Activated CD4-positive, alpha-beta T cell treated with anti-CD3 and anti-CD28 coated beads, Interleukin-2, amount 10 ng/mL, durations not matched to agents 24 days and 14 days (primary cell): ENCODE measurements at regions of chr1 and their contacts with region 1.

Region 1: GRCh38 chr1:209723756-209724693 is 19.4 kb downstream of the HSD11B1 start:
- DNase-seq: peak; percentile 83
- H3K4me3 Mint-ChIP-seq: peak overlapping the region; percentile 47
- H3K27ac Mint-ChIP-seq: peak overlapping the region; percentile 100
- H3K4me1 Mint-ChIP-seq: peaks cover 55% of the 10 kb centered on the region
- H3K27me3 Mint-ChIP-seq: no peaks in the 10 kb centered on the region

Region 2: GRCh38 chr1:209688746-209689234 is 35.2 kb before region 1 on chr1:
- intact Hi-C with region 1: no loop called
- DNase-seq: no peak
- H3K4me3 Mint-ChIP-seq: no peak overlapping the region
- H3K27ac Mint-ChIP-seq: no peak overlapping the region
- H3K4me1 Mint-ChIP-seq: peaks cover 59% of the 10 kb centered on the region
- H3K27me3 Mint-ChIP-seq: no peaks in the 10 kb centered on the region

Region 3: DNA sequence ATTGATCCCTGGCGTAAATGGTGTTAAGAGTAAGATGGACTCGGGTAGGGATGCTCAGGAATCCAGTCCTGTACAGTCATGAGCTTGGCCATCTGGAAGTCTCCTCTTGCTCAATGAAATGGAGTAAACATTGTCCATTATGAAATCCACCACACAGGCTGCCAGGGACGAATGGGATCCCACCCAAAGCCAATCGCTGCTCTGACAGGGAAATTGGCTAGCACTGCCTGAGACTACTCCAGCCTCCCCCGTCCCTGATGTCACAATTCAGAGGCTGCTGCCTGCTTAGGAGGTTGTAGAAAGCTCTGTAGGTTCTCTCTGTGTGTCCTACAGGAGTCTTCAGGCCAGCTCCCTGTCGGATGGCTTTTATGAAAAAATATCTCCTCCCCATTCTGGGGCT is 19.4 kb before region 1 on chr1 and contains the start of gene HSD11B1:
- intact Hi-C with region 1: loop called (anchors 1 kb)
- DNase-seq: no peak
- H3K4me3 Mint-ChIP-seq: peak within 1 kb of the TSS; percentile 54
- H3K27ac Mint-ChIP-seq: peak within 1 kb of the TSS; percentile 91
- H3K4me1 Mint-ChIP-seq: peaks cover 71% of the 10 kb centered on the region
- H3K27me3 Mint-ChIP-seq: no peaks in the 10 kb centered on the region
- total RNA-seq, gene HSD11B1: 15.1 TPM in 2 replicates

Region 4: DNA sequence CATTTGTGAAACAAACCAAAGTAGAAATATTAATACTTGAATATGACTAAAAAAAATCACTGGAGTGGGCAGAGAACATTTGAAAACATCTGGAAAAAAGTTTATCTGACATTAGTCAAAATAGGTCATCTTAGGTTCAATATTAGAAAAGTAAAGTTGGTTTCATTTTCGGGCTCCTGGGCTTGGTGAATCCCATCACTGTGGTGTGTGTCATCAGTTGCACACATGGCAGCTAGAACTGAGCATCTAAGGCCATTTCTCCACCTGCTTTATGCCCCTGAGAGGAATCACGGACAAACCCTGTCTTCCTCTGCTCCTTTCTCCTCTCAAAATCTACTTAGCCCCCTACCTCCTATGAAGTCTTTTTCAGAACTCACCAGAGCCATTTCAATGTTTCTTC is 13.9 kb before region 1 on chr1:
- intact Hi-C with region 1: loop called (anchors 2 kb)
- DNase-seq: no peak
- H3K4me3 Mint-ChIP-seq: peak overlapping the region; percentile 55
- H3K27ac Mint-ChIP-seq: peak overlapping the region; percentile 93
- H3K4me1 Mint-ChIP-seq: peaks cover 63% of the 10 kb centered on the region
- H3K27me3 Mint-ChIP-seq: no peaks in the 10 kb centered on the region

Region 5: GRCh38 chr1:209736490-209737117 is 12.6 kb after region 1 on chr1:
- intact Hi-C with region 1: loop called (anchors 1 kb)
- DNase-seq: no peak
- H3K4me3 Mint-ChIP-seq: peak overlapping the region; percentile 34
- H3K27ac Mint-ChIP-seq: peak overlapping the region; percentile 93
- H3K4me1 Mint-ChIP-seq: peaks cover 54% of the 10 kb centered on the region
- H3K27me3 Mint-ChIP-seq: no peaks in the 10 kb centered on the region